Caco-2 (cell line): ENCODE measurements at regions of chr11 and their contacts with region 1.

Region 1: GRCh38 chr11:57480409-57481137 is 20.2 kb downstream of the RTN4RL2 start:
- DNase-seq: peak; percentile 73 to 80
- H3K4me3 ChIP-seq: no peak overlapping the region
- H3K4me3 Mint-ChIP-seq: no peak overlapping the region
- H3K27ac Mint-ChIP-seq: peak overlapping the region; percentile 5
- H3K4me1 ChIP-seq: peaks cover 5% of the 10 kb centered on the region; the same call in 1 of the 2 replicates
- H3K4me1 Mint-ChIP-seq: peaks cover 16% of the 10 kb centered on the region
- H3K27me3 ChIP-seq: no peaks in the 10 kb centered on the region
- H3K27me3 Mint-ChIP-seq: no peaks in the 10 kb centered on the region
- CTCF ChIP-seq: peak; percentile 61 to 74

Region 2: GRCh38 chr11:57324886-57325734 is 155.5 kb before region 1 on chr11 and contains the start of gene TNKS1BP1:
- CTCF ChIA-PET with region 1: no interaction called
- POLR2A ChIA-PET with region 1: no interaction called
- intact Hi-C with region 1: no loop called
- DNase-seq: peak; percentile 98 to 99
- H3K4me3 ChIP-seq: peak within 1 kb of the TSS; percentile 79
- H3K4me3 Mint-ChIP-seq: peak within 1 kb of the TSS; percentile 88
- H3K27ac Mint-ChIP-seq: peak within 1 kb of the TSS; percentile 95
- H3K4me1 ChIP-seq: peaks cover 52% of the 10 kb centered on the region
- H3K4me1 Mint-ChIP-seq: peaks cover 57% of the 10 kb centered on the region
- H3K27me3 ChIP-seq: no peaks in the 10 kb centered on the region
- H3K27me3 Mint-ChIP-seq: no peaks in the 10 kb centered on the region
- CTCF ChIP-seq: no peak
- total RNA-seq, gene TNKS1BP1: 107 and 120 TPM in 2 replicates

Region 3: GRCh38 chr11:57410287-57410686 is 70.3 kb before region 1 on chr11:
- CTCF ChIA-PET with region 1: no interaction called
- POLR2A ChIA-PET with region 1: no interaction called
- intact Hi-C with region 1: no loop called
- DNase-seq: no peak
- H3K4me3 ChIP-seq: no peak overlapping the region
- H3K4me3 Mint-ChIP-seq: no peak overlapping the region
- H3K27ac Mint-ChIP-seq: no peak overlapping the region
- H3K4me1 ChIP-seq: no peaks in the 10 kb centered on the region
- H3K4me1 Mint-ChIP-seq: peaks cover 7% of the 10 kb centered on the region
- H3K27me3 ChIP-seq: no peaks in the 10 kb centered on the region
- H3K27me3 Mint-ChIP-seq: no peaks in the 10 kb centered on the region
- CTCF ChIP-seq: no peak

Region 4: GRCh38 chr11:57444362-57445121 is 36.0 kb before region 1 on chr11:
- CTCF ChIA-PET with region 1: no interaction called
- POLR2A ChIA-PET with region 1: no interaction called
- intact Hi-C with region 1: no loop called
- DNase-seq: no peak
- H3K4me3 ChIP-seq: no peak overlapping the region
- H3K4me3 Mint-ChIP-seq: no peak overlapping the region
- H3K27ac Mint-ChIP-seq: peak overlapping the region; percentile 49
- H3K4me1 ChIP-seq: peaks cover 7% of the 10 kb centered on the region
- H3K4me1 Mint-ChIP-seq: peaks cover 10% of the 10 kb centered on the region
- H3K27me3 ChIP-seq: no peaks in the 10 kb centered on the region
- H3K27me3 Mint-ChIP-seq: no peaks in the 10 kb centered on the region
- CTCF ChIP-seq: no peak

Region 5: GRCh38 chr11:57515332-57516060 is 34.9 kb after region 1 on chr11 and contains the start of gene SLC43A1:
- CTCF ChIA-PET with region 1: interaction called, 10 read pairs
- POLR2A ChIA-PET with region 1: no interaction called
- intact Hi-C with region 1: no loop called
- DNase-seq: peak; percentile 66 to 75
- H3K4me3 ChIP-seq: peak within 1 kb of the TSS; percentile 79
- H3K4me3 Mint-ChIP-seq: peak within 1 kb of the TSS; percentile 91
- H3K27ac Mint-ChIP-seq: peak within 1 kb of the TSS; percentile 82
- H3K4me1 ChIP-seq: peaks cover 8% of the 10 kb centered on the region
- H3K4me1 Mint-ChIP-seq: no peaks in the 10 kb centered on the region
- H3K27me3 ChIP-seq: no peaks in the 10 kb centered on the region
- H3K27me3 Mint-ChIP-seq: no peaks in the 10 kb centered on the region
- CTCF ChIP-seq: no peak
- total RNA-seq, gene SLC43A1: 71.7 and 80.5 TPM in 2 replicates

Region 6: GRCh38 chr11:57552479-57552878 is 71.9 kb after region 1 on chr11:
- CTCF ChIA-PET with region 1: interaction called, 10 read pairs
- POLR2A ChIA-PET with region 1: no interaction called
- intact Hi-C with region 1: no loop called
- DNase-seq: peak; percentile 89 to 93
- H3K4me3 ChIP-seq: no peak overlapping the region; the same call in 1 of the 2 replicates
- H3K4me3 Mint-ChIP-seq: peak overlapping the region; percentile 75
- H3K27ac Mint-ChIP-seq: peak overlapping the region; percentile 99
- H3K4me1 ChIP-seq: peaks cover 44% of the 10 kb centered on the region
- H3K4me1 Mint-ChIP-seq: peaks cover 18% of the 10 kb centered on the region
- H3K27me3 ChIP-seq: no peaks in the 10 kb centered on the region
- H3K27me3 Mint-ChIP-seq: no peaks in the 10 kb centered on the region
- CTCF ChIP-seq: peak in 1 of 2 experiments; percentile 8

Region 7: GRCh38 chr11:57562596-57562995 is 82.0 kb after region 1 on chr11:
- CTCF ChIA-PET with region 1: interaction called, 9 read pairs
- POLR2A ChIA-PET with region 1: no interaction called
- intact Hi-C with region 1: loop called (anchors 5 kb)
- DNase-seq: peak in 1 of 2 experiments; percentile 53
- H3K4me3 ChIP-seq: no peak overlapping the region
- H3K4me3 Mint-ChIP-seq: no peak overlapping the region
- H3K27ac Mint-ChIP-seq: peak overlapping the region; percentile 19
- H3K4me1 ChIP-seq: peaks cover 6% of the 10 kb centered on the region; the same call in 1 of the 2 replicates
- H3K4me1 Mint-ChIP-seq: peaks cover 7% of the 10 kb centered on the region
- H3K27me3 ChIP-seq: no peaks in the 10 kb centered on the region
- H3K27me3 Mint-ChIP-seq: no peaks in the 10 kb centered on the region
- CTCF ChIP-seq: peak; percentile 26 to 30